ENCODE measurements at regions of chr5 and their contacts with region 1.

Region 1: GRCh38 chr5:78467752-78468357 is 107.4 kb downstream of the SCAMP1 start:
- DNase-seq: peak; percentile 47
- ATAC-seq: peak; percentile 63
- H3K4me3 ChIP-seq: no peak overlapping the region
- H3K4me3 Mint-ChIP-seq: no peak overlapping the region
- H3K27ac ChIP-seq: no peak overlapping the region
- H3K27ac Mint-ChIP-seq: no peak overlapping the region
- H3K4me1 ChIP-seq: no peaks in the 10 kb centered on the region
- H3K4me1 Mint-ChIP-seq: peaks cover 3% of the 10 kb centered on the region
- H3K27me3 ChIP-seq: no peaks in the 10 kb centered on the region
- H3K27me3 Mint-ChIP-seq: no peaks in the 10 kb centered on the region
- CTCF ChIP-seq: peak; percentile 90

Region 2: DNA sequence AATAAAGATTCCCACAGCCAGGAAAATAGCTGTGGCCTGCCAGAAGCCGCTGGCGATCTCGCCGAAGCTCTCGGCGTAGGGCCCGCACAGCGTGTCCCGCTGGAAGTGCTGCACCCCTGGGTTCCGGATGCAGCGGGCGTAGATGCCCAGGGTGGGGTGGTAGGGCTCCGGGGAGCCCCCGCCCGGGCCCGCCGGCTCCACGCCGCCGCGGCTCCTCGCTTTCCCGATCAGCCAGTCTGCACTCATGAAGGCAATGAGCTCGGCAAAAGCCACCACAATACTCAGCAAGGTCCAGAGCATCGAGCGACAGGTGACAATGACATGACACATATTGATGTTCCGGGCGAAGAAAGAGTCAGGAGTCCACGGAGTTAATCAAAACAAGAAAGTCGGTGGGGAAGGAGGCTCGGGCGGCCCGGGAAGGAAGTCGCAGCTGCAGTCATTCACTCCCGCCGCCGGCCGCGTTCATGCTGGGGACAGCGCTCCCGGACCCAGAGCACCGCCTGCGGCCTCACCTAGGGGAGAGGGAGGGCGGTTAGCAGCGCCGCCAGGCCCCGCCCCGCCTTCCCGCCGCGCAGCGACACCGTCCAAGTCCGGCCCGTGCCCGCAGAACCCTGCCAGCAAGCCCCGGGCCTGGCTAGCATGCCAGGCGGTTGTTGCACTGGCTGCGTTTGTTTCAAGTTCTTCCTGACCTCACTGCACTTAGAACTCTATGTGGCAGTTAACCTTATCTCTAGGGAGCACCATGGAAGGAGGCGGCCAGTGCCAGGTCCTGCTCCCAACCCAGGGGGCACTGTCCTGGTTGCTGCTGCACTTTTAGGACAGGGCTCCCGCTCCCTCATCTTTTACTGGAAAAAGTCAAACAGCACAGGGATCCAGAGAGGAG is 42.3 kb after region 1 on chr5:
- CTCF ChIA-PET with region 1: interaction called, 5 read pairs
- POLR2A ChIA-PET with region 1: no interaction called
- intact Hi-C with region 1: loop called (anchors 5 kb)
- DNase-seq: peak; percentile 54
- ATAC-seq: peak; percentile 84
- H3K4me3 ChIP-seq: peak overlapping the region; percentile 37 to 70 (median 58)
- H3K4me3 Mint-ChIP-seq: peak overlapping the region; percentile 94
- H3K27ac ChIP-seq: no peak overlapping the region
- H3K27ac Mint-ChIP-seq: peak overlapping the region; percentile 4
- H3K4me1 ChIP-seq: peaks cover 25% of the 10 kb centered on the region in 2 donors
- H3K4me1 Mint-ChIP-seq: peaks cover 34% of the 10 kb centered on the region
- H3K27me3 ChIP-seq: peaks cover 0 to 13% (median 5%) of the 10 kb centered on the region in 4 experiments
- H3K27me3 Mint-ChIP-seq: no peaks in the 10 kb centered on the region
- CTCF ChIP-seq: no peak

Region 3: DNA sequence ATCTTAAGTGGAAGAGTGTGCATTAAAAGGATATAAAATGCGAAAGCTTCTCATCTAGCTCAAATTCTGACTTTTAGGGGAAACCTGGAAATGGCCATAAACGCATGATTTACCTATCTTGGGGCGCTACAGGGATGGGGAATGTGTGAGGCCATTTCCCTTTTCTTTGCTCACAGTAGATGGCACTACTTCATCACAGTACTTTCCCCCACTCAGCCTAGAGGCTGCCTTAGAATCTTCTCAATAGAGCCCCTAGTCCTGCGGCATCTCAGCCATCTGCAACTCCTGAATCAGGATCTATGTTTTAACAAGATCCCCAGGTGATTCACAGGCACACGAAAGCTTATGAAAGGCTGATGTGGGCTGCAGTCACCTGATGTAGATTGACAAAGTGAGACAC is 70.0 kb after region 1 on chr5:
- CTCF ChIA-PET with region 1: interaction called, 17 read pairs
- POLR2A ChIA-PET with region 1: no interaction called
- intact Hi-C with region 1: no loop called
- DNase-seq: peak; percentile 65
- ATAC-seq: peak; percentile 75
- H3K4me3 ChIP-seq: no peak overlapping the region
- H3K4me3 Mint-ChIP-seq: no peak overlapping the region
- H3K27ac ChIP-seq: no peak overlapping the region
- H3K27ac Mint-ChIP-seq: no peak overlapping the region
- H3K4me1 ChIP-seq: peaks cover 0 to 3% of the 10 kb centered on the region in 2 donors
- H3K4me1 Mint-ChIP-seq: peaks cover 6% of the 10 kb centered on the region
- H3K27me3 ChIP-seq: no peaks in the 10 kb centered on the region
- H3K27me3 Mint-ChIP-seq: no peaks in the 10 kb centered on the region
- CTCF ChIP-seq: peak; percentile 63

Region 4: DNA sequence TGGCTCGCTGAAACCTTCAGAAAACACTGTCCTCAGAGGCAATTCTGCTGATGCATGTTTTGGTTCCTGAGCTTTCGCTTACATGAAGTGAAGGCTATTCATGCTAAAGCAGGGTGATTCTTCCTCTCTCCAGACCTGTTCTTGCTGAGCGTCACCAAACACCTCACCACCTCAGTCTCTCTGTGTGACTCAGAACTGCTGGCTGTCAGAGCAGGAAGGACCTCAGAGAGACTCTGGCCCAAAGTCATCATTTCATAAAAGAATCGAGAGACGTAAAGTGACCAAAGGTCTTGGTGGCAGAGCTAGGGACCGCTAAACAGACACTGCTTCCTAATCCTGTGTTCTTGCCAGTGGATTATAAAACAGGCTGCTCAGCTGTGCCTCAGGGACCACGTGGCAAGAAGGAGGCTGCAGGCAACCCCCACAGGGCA is 106.9 kb after region 1 on chr5:
- CTCF ChIA-PET with region 1: interaction called, 13 read pairs
- POLR2A ChIA-PET with region 1: no interaction called
- intact Hi-C with region 1: no loop called
- DNase-seq: peak; percentile 22
- ATAC-seq: peak; percentile 55
- H3K4me3 ChIP-seq: no peak overlapping the region
- H3K4me3 Mint-ChIP-seq: peak overlapping the region; percentile 26
- H3K27ac ChIP-seq: peak overlapping the region in 1 of 2 donors; percentile 52
- H3K27ac Mint-ChIP-seq: peak overlapping the region; percentile 58
- H3K4me1 ChIP-seq: peaks cover 22 to 25% of the 10 kb centered on the region in 2 donors
- H3K4me1 Mint-ChIP-seq: peaks cover 27% of the 10 kb centered on the region
- H3K27me3 ChIP-seq: no peaks in the 10 kb centered on the region
- H3K27me3 Mint-ChIP-seq: no peaks in the 10 kb centered on the region
- CTCF ChIP-seq: no peak

Region 5: DNA sequence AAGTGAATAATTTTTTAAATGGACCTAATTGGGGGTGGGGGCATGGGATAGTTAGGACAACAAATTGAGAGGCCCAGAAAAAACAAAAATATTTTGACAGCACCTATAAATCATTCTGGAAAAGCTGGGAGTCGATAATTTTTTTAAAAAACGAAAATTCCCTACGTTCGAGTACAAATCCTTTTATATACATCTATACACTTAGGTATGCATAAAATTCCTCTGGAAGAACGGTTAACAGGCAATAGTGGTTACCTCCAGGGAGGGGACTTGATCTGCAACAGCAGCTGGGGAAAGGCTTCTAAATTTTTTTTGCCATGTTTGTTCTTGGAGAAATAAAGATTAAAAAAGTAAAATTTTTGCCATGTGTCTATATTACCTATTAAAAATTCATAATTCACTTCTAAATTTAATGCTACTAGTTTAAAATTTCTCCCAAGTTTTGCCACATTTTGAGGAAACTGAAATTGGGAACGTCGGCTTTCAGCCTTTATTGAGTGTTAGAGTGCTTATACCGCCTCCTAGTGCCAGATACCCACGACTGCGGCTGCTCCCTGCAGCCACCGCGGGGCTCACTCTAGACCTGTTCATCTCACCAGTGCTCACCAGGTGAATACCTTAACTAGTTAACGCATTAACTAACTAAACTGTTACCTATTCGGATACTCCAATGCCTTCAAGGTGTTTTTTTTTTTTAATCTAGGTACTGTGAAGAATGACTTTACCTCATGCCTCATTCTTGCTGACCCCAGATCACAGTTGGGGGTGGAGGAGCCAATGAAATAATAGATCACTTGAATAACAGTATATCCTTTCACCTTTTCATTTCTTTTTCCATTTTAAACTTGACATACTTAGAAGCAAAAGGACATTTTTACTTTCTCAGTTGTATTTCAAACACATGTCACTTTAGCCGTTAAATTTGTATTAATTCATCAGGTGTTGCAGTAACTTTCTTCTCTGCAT is 642.0 kb after region 1 on chr5:
- CTCF ChIA-PET with region 1: interaction called, 3 read pairs
- POLR2A ChIA-PET with region 1: no interaction called
- intact Hi-C with region 1: loop called (anchors 2 kb)
- DNase-seq: peak; percentile 26
- ATAC-seq: peak; percentile 33
- H3K4me3 ChIP-seq: no peak overlapping the region
- H3K4me3 Mint-ChIP-seq: no peak overlapping the region
- H3K27ac ChIP-seq: no peak overlapping the region
- H3K27ac Mint-ChIP-seq: no peak overlapping the region
- H3K4me1 ChIP-seq: no peaks in the 10 kb centered on the region
- H3K4me1 Mint-ChIP-seq: no peaks in the 10 kb centered on the region
- H3K27me3 ChIP-seq: peaks cover 0 to 41% (median 18%) of the 10 kb centered on the region in 4 experiments
- H3K27me3 Mint-ChIP-seq: peaks cover 63% of the 10 kb centered on the region
- CTCF ChIP-seq: peak; percentile 70

Measured in B cell (primary cell).